Activated CD8-positive, alpha-beta T cell treated with anti-CD3 and anti-CD28 coated beads for 36 hours (primary cell): ENCODE measurements at regions of chr5 and their contacts with region 1.

Region 1: GRCh38 chr5:143403593-143404415 is at the start of gene NR3C1:
- DNase-seq: peak; percentile 86
- ATAC-seq: peak; percentile 65
- H3K4me3 Mint-ChIP-seq: peak within 1 kb of the TSS; percentile 93
- H3K27ac Mint-ChIP-seq: peak within 1 kb of the TSS; percentile 95
- H3K4me1 Mint-ChIP-seq: peaks cover 42% of the 10 kb centered on the region
- H3K27me3 Mint-ChIP-seq: no peaks in the 10 kb centered on the region
- CTCF ChIP-seq: peak; percentile 71
- total RNA-seq, gene NR3C1: 52.7 to 55.6 TPM

Region 2: DNA sequence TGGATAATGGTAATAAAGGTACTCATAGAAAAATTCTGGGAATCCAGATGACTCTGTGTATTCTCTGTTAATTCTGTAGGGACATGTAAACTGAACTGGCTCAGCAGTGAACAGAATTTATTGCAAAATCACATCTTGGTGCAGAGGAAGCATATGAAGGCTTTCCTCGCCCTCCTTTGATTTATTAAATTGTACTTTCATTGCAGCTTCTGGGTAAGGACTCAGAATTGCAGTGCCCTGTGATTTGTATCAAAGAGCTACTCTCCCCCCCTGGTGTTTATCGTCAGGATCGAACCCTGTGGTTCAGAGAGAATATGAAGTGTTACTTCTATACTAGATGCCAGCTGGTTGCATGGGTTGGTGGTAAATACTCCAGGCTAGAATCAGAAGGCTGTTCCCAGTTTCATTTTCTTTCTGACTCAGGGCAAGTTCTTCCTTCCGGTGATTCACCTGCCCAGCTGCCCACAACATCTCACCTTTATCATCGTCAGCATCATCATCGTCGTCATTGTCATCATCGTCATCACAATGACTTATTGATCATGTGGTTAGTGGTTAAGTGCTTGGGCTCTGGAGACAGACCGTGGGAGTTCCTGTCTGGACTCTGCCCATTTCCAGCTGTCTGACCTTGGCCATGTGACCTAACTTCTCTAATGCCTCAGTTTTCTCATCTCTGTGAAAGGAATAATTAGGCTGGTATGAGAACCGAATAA is 394.8 kb before region 1 on chr5:
- CTCF ChIA-PET with region 1: interaction called, 14 read pairs
- POLR2A ChIA-PET with region 1: interaction called, 4 read pairs
- intact Hi-C with region 1: loop called (anchors 2 kb)
- DNase-seq: peak; percentile 94
- ATAC-seq: peak; percentile 89
- H3K4me3 Mint-ChIP-seq: peak overlapping the region; percentile 54
- H3K27ac Mint-ChIP-seq: peak overlapping the region; percentile 90
- H3K4me1 Mint-ChIP-seq: peaks cover 83% of the 10 kb centered on the region
- H3K27me3 Mint-ChIP-seq: no peaks in the 10 kb centered on the region
- CTCF ChIP-seq: peak; percentile 47

Region 3: GRCh38 chr5:143229896-143230675 is 173.7 kb before region 1 on chr5:
- CTCF ChIA-PET with region 1: interaction called, 3 read pairs
- POLR2A ChIA-PET with region 1: interaction called, 4 read pairs
- intact Hi-C with region 1: loop called (anchors 5 kb)
- DNase-seq: peak; percentile 83
- ATAC-seq: peak; percentile 90
- H3K4me3 Mint-ChIP-seq: peak overlapping the region; percentile 61
- H3K27ac Mint-ChIP-seq: peak overlapping the region; percentile 92
- H3K4me1 Mint-ChIP-seq: peaks cover 28% of the 10 kb centered on the region
- H3K27me3 Mint-ChIP-seq: no peaks in the 10 kb centered on the region
- CTCF ChIP-seq: no peak

Region 4: GRCh38 chr5:143241892-143242291 is 161.9 kb before region 1 on chr5:
- CTCF ChIA-PET with region 1: no interaction called
- POLR2A ChIA-PET with region 1: no interaction called
- intact Hi-C with region 1: no loop called
- DNase-seq: no peak
- ATAC-seq: no peak
- H3K4me3 Mint-ChIP-seq: no peak overlapping the region
- H3K27ac Mint-ChIP-seq: no peak overlapping the region
- H3K4me1 Mint-ChIP-seq: no peaks in the 10 kb centered on the region
- H3K27me3 Mint-ChIP-seq: no peaks in the 10 kb centered on the region
- CTCF ChIP-seq: no peak

Region 5: GRCh38 chr5:143373076-143373475 is 30.7 kb before region 1 on chr5:
- CTCF ChIA-PET with region 1: no interaction called
- POLR2A ChIA-PET with region 1: no interaction called
- intact Hi-C with region 1: no loop called
- DNase-seq: no peak
- ATAC-seq: no peak
- H3K4me3 Mint-ChIP-seq: no peak overlapping the region
- H3K27ac Mint-ChIP-seq: no peak overlapping the region
- H3K4me1 Mint-ChIP-seq: peaks cover 63% of the 10 kb centered on the region
- H3K27me3 Mint-ChIP-seq: no peaks in the 10 kb centered on the region
- CTCF ChIP-seq: no peak

Region 6: DNA sequence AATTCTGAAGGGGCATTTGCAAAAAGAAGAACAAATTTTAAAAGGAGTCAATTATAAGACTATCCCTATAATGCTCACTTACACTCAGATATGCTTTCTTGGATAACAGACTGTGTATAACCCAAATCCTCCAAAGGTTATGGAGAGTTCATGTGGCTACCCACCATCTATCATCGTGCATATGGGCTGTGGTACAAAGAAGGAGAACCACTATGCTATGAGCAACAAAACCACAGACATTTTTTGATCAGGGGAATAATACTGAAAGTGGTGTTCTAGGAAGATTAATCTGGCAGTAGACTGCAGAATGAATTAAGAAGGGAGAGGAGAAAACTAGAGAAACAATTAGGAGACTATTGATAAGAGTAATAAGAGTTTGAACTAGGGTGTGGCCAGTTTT is 17.1 kb before region 1 on chr5:
- CTCF ChIA-PET with region 1: interaction called, 10 read pairs
- POLR2A ChIA-PET with region 1: interaction called, 4 read pairs
- intact Hi-C with region 1: no loop called
- DNase-seq: peak; percentile 59
- ATAC-seq: peak; percentile 89
- H3K4me3 Mint-ChIP-seq: no peak overlapping the region
- H3K27ac Mint-ChIP-seq: peak overlapping the region; percentile 24
- H3K4me1 Mint-ChIP-seq: peaks cover 86% of the 10 kb centered on the region
- H3K27me3 Mint-ChIP-seq: no peaks in the 10 kb centered on the region
- CTCF ChIP-seq: no peak

Region 7: GRCh38 chr5:143435210-143435657 is 31.4 kb after region 1 on chr5:
- CTCF ChIA-PET with region 1: interaction called, 7 read pairs
- POLR2A ChIA-PET with region 1: interaction called, 50 read pairs
- intact Hi-C with region 1: no loop called
- DNase-seq: peak; percentile 49
- ATAC-seq: peak; percentile 25
- H3K4me3 Mint-ChIP-seq: peak overlapping the region; percentile 86
- H3K27ac Mint-ChIP-seq: peak overlapping the region; percentile 98
- H3K4me1 Mint-ChIP-seq: peaks cover 68% of the 10 kb centered on the region
- H3K27me3 Mint-ChIP-seq: no peaks in the 10 kb centered on the region
- CTCF ChIP-seq: no peak

Region 8: GRCh38 chr5:143446535-143447226 is 42.9 kb after region 1 on chr5:
- CTCF ChIA-PET with region 1: interaction called, 6 read pairs
- POLR2A ChIA-PET with region 1: interaction called, 13 read pairs
- intact Hi-C with region 1: no loop called
- DNase-seq: peak; percentile 43
- ATAC-seq: peak; percentile 60
- H3K4me3 Mint-ChIP-seq: no peak overlapping the region
- H3K27ac Mint-ChIP-seq: peak overlapping the region; percentile 37
- H3K4me1 Mint-ChIP-seq: peaks cover 23% of the 10 kb centered on the region
- H3K27me3 Mint-ChIP-seq: no peaks in the 10 kb centered on the region
- CTCF ChIP-seq: no peak